A673 (cell line): ENCODE measurements at regions of chr1 and their contacts with region 1.

Region 1: GRCh38 chr1:63759778-63760177 is 14.0 kb upstream of the ROR1 start:
- DNase-seq: no peak
- H3K4me3 ChIP-seq: no peak overlapping the region
- H3K27ac ChIP-seq: no peak overlapping the region
- H3K4me1 ChIP-seq: no peaks in the 10 kb centered on the region
- H3K27me3 ChIP-seq: no peaks in the 10 kb centered on the region
- CTCF ChIP-seq: no peak

Region 2: GRCh38 chr1:63624911-63625310 is 134.9 kb before region 1 on chr1:
- CTCF ChIA-PET with region 1: no interaction called
- POLR2A ChIA-PET with region 1: no interaction called
- intact Hi-C with region 1: loop called (anchors 10 kb)
- DNase-seq: no peak
- H3K4me3 ChIP-seq: no peak overlapping the region
- H3K27ac ChIP-seq: no peak overlapping the region
- H3K4me1 ChIP-seq: no peaks in the 10 kb centered on the region
- H3K27me3 ChIP-seq: no peaks in the 10 kb centered on the region
- CTCF ChIP-seq: no peak